Naive thymus-derived CD4-positive, alpha-beta T cell (primary cell): ENCODE measurements at regions of chr17 and their contacts with region 1.

Region 1: GRCh38 chr17:7687908-7688807 is at the start of gene WRAP53:
- DNase-seq: peak; percentile 93 to 97 (median 96)
- ATAC-seq: peak; percentile 89
- H3K4me3 ChIP-seq: peak within 1 kb of the TSS; percentile 96
- H3K4me3 Mint-ChIP-seq: peak within 1 kb of the TSS; percentile 95 to 99 (median 97)
- H3K27ac ChIP-seq: peak within 1 kb of the TSS; percentile 96
- H3K27ac Mint-ChIP-seq: peak within 1 kb of the TSS; percentile 99 to 100 (median 100)
- H3K4me1 ChIP-seq: peaks cover 28 to 31% of the 10 kb centered on the region in 2 donors
- H3K4me1 Mint-ChIP-seq: peaks cover 31 to 47% (median 41%) of the 10 kb centered on the region in 7 donors
- H3K27me3 ChIP-seq: no peaks in the 10 kb centered on the region
- H3K27me3 Mint-ChIP-seq: no peaks in the 10 kb centered on the region
- total RNA-seq, gene WRAP53: 6.7 to 21.1 (median 9.6) TPM

Region 2: DNA sequence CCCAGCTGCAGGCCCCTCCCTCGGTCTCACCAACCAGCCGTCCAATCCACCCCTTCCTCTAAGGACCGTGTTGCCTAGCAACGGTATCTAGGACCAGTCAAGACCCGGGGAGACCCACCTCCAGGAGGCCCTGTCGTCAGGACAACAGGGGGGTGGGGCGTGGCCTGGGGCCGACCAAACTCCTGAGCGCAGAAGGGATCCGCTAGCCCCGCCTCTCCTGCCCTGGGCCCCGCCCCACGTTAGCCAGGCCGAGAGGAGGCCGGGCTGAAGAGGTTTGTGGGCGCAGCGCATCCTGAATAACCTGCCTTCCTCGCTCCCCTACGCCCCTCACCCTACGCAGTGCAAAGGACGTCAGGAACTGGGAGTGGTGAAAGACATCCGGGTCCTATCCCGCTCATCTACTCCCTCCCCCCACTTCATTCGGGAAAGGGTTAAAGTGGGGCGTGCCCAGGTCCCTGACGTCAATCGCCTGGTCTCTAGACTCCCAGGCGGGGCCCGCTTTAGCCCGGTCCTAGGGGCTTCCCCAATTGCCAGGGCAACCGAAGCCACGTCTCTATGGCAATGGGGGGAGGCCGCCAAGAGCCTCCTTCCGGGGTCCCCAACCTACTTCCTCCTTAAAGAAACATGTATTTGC is 483.2 kb before region 1 on chr17:
- CTCF ChIA-PET with region 1: no interaction called
- POLR2A ChIA-PET with region 1: no interaction called
- intact Hi-C with region 1: loop called in 1 of 2 experiments (anchors 2 kb)
- DNase-seq: peak; percentile 90 to 99 (median 97)
- ATAC-seq: peak; percentile 90
- H3K4me3 ChIP-seq: peak overlapping the region; percentile 77
- H3K4me3 Mint-ChIP-seq: peak overlapping the region; percentile 67 to 94 (median 85)
- H3K27ac ChIP-seq: peak overlapping the region; percentile 91
- H3K27ac Mint-ChIP-seq: peak overlapping the region; percentile 88 to 99 (median 95)
- H3K4me1 ChIP-seq: peaks cover 15 to 17% of the 10 kb centered on the region in 2 donors
- H3K4me1 Mint-ChIP-seq: peaks cover 28 to 39% (median 32%) of the 10 kb centered on the region in 7 donors
- H3K27me3 ChIP-seq: no peaks in the 10 kb centered on the region
- H3K27me3 Mint-ChIP-seq: no peaks in the 10 kb centered on the region

Region 3: DNA sequence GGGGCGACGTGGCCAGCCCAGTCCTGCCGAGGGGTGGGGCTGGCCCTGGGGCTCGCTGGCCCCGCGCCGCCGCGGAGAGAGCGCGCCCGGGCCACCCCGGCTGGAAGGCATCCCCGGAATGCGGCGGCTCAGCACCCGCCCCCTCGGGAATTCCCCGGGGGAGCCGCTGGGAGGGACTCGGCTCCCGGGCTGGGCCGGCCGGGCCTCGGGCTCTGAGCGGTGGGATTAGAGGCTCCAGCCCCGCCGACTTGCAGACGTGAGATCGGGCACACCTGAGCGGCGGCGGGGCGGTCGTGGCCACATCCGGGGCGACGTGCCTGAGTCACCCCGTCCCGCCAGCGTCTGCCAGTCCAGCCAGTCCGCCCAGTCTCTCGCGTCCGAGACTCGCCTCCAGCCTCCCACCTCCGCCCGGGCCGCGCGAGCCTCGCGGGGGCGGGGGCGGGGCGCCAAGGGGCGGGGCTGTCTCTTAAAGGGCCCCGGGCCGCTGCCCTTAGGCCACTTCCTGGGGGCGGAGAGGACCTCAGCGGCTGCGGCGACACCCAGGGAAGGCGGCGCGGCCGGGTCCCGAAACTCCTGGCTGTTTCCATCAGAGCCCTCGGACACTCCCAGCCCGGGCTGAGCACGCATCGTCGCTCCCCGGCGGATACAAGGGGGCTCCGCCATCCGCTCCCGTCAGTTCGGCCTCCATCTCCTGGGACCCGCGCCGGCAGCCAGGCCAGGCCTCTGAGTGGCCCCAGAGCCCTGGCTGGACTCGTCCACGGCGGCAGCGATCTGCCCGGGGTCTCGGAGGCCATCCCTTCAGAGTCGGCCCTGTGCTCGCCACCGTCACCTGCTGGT is 336.3 kb before region 1 on chr17 and contains the start of gene KCTD11:
- CTCF ChIA-PET with region 1: interaction called, 4 read pairs
- POLR2A ChIA-PET with region 1: interaction called, 4 read pairs
- intact Hi-C with region 1: loop called in 1 of 2 experiments (anchors 5 kb)
- DNase-seq: peak; percentile 40 to 88 (median 58)
- ATAC-seq: peak; percentile 72
- H3K4me3 ChIP-seq: peak within 1 kb of the TSS; percentile 57
- H3K4me3 Mint-ChIP-seq: peak within 1 kb of the TSS; percentile 78 to 94 (median 88)
- H3K27ac ChIP-seq: peak within 1 kb of the TSS; percentile 74
- H3K27ac Mint-ChIP-seq: peak within 1 kb of the TSS; percentile 72 to 91 (median 86)
- H3K4me1 ChIP-seq: peaks cover 10 to 27% of the 10 kb centered on the region in 2 donors
- H3K4me1 Mint-ChIP-seq: peaks cover 14 to 62% (median 43%) of the 10 kb centered on the region in 7 donors
- H3K27me3 ChIP-seq: no peaks in the 10 kb centered on the region
- H3K27me3 Mint-ChIP-seq: no peaks in the 10 kb centered on the region
- total RNA-seq, gene KCTD11: 2.7 to 13.7 (median 4.0) TPM

Region 4: DNA sequence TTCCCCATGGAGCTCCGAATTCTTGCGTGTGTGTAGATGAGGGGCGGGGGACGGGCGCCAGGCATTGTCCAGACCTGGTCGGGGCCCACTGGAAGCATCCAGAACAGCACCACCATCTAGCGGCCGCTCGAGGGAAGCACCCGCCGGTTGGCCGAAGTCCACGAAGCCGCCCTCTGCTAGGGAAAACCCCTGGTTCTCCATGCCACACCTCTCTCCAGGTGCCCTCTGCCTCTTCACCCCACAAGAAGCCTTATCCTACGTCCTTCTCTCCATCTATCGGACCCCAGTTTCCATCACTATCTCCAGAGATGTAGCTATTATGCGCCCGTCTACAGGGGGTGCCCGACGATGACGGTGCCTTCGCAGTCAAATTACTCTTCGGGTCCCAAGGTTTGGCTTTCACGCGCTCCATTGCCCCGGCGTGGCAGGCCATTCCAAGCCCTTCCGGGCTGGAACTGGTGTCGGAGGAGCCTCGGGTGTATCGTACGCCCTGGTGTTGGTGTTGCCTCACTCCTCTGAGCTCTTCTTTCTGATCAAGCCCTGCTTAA is 127.1 kb before region 1 on chr17:
- CTCF ChIA-PET with region 1: interaction called, 13 read pairs
- POLR2A ChIA-PET with region 1: interaction called, 35 read pairs
- intact Hi-C with region 1: loop called in 1 of 2 experiments (anchors 1 kb)
- DNase-seq: peak; percentile 60 to 86 (median 71)
- ATAC-seq: peak; percentile 76
- H3K4me3 ChIP-seq: peak overlapping the region; percentile 96
- H3K4me3 Mint-ChIP-seq: peak overlapping the region; percentile 87 to 97 (median 93)
- H3K27ac ChIP-seq: peak overlapping the region; percentile 92
- H3K27ac Mint-ChIP-seq: peak overlapping the region; percentile 90 to 100 (median 96)
- H3K4me1 ChIP-seq: peaks cover 17 to 54% of the 10 kb centered on the region in 2 donors
- H3K4me1 Mint-ChIP-seq: peaks cover 33 to 55% (median 49%) of the 10 kb centered on the region in 7 donors
- H3K27me3 ChIP-seq: no peaks in the 10 kb centered on the region
- H3K27me3 Mint-ChIP-seq: peaks cover 0 to 2% (median 0%) of the 10 kb centered on the region in 5 donors

Region 5: GRCh38 chr17:7644775-7645174 is 43.4 kb before region 1 on chr17:
- CTCF ChIA-PET with region 1: interaction called, 8 read pairs
- POLR2A ChIA-PET with region 1: interaction called, 55 read pairs
- intact Hi-C with region 1: no loop called
- DNase-seq: no peak
- ATAC-seq: peak; percentile 75
- H3K4me3 ChIP-seq: no peak overlapping the region
- H3K4me3 Mint-ChIP-seq: peak overlapping the region in 1 of 10 donors; percentile 41
- H3K27ac ChIP-seq: no peak overlapping the region
- H3K27ac Mint-ChIP-seq: peak overlapping the region in 1 of 9 donors; percentile 12
- H3K4me1 ChIP-seq: peaks cover 0 to under 1% of the 10 kb centered on the region in 2 donors
- H3K4me1 Mint-ChIP-seq: peaks cover under 1 to 20% (median 11%) of the 10 kb centered on the region in 7 donors
- H3K27me3 ChIP-seq: peaks cover 0 to under 1% of the 10 kb centered on the region in 2 donors
- H3K27me3 Mint-ChIP-seq: peaks cover 7 to 21% (median 13%) of the 10 kb centered on the region in 5 donors

Region 6: DNA sequence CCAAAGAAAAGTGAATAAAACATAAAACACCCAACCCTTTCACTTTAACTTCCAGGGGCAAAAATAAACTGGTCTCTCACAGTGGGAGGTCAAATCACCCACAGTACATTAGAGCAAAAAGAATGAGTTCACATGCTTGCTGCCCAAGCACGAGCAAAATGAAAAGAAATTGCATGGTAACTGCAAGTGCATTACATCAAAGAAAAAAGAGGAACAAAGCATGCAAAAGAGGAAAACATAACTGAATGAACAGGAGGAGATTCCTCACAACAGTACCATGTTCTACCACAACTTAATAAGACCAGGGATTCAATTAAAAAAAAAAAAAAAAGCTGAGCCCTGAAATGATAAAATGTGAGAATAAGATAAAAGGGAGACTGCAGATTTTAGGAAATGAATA is 41.7 kb after region 1 on chr17:
- CTCF ChIA-PET with region 1: no interaction called
- POLR2A ChIA-PET with region 1: no interaction called
- intact Hi-C with region 1: no loop called
- DNase-seq: no peak
- ATAC-seq: peak; percentile 37
- H3K4me3 ChIP-seq: no peak overlapping the region
- H3K4me3 Mint-ChIP-seq: no peak overlapping the region
- H3K27ac ChIP-seq: no peak overlapping the region
- H3K27ac Mint-ChIP-seq: no peak overlapping the region
- H3K4me1 ChIP-seq: no peaks in the 10 kb centered on the region
- H3K4me1 Mint-ChIP-seq: no peaks in the 10 kb centered on the region
- H3K27me3 ChIP-seq: no peaks in the 10 kb centered on the region
- H3K27me3 Mint-ChIP-seq: peaks cover 8 to 26% (median 13%) of the 10 kb centered on the region in 5 donors

Region 7: GRCh38 chr17:7856883-7857723 is 168.9 kb after region 1 on chr17 and contains the start of gene NAA38:
- CTCF ChIA-PET with region 1: interaction called, 3 read pairs
- POLR2A ChIA-PET with region 1: interaction called, 10 read pairs
- intact Hi-C with region 1: loop called (anchors 1 kb)
- DNase-seq: peak; percentile 81 to 99 (median 97)
- ATAC-seq: peak; percentile 87
- H3K4me3 ChIP-seq: peak within 1 kb of the TSS; percentile 70
- H3K4me3 Mint-ChIP-seq: no peak within 1 kb of the TSS
- H3K27ac ChIP-seq: peak within 1 kb of the TSS; percentile 83
- H3K27ac Mint-ChIP-seq: no peak within 1 kb of the TSS
- H3K4me1 ChIP-seq: peaks cover 25 to 26% of the 10 kb centered on the region in 2 donors
- H3K4me1 Mint-ChIP-seq: peaks cover 0 to 16% (median 5%) of the 10 kb centered on the region in 7 donors
- H3K27me3 ChIP-seq: no peaks in the 10 kb centered on the region
- H3K27me3 Mint-ChIP-seq: no peaks in the 10 kb centered on the region
- total RNA-seq, gene NAA38: 22.1 to 63.8 (median 24.9) TPM

Region 8: GRCh38 chr17:8248751-8249607 is 560.8 kb after region 1 on chr17 and contains the start of gene PFAS:
- CTCF ChIA-PET with region 1: no interaction called
- POLR2A ChIA-PET with region 1: interaction called, 13 read pairs
- intact Hi-C with region 1: loop called (anchors 5 kb)
- DNase-seq: peak; percentile 91 to 98 (median 94)
- ATAC-seq: peak; percentile 64
- H3K4me3 ChIP-seq: peak within 1 kb of the TSS; percentile 94
- H3K4me3 Mint-ChIP-seq: peak within 1 kb of the TSS; percentile 92 to 100 (median 99)
- H3K27ac ChIP-seq: peak within 1 kb of the TSS; percentile 100
- H3K27ac Mint-ChIP-seq: peak within 1 kb of the TSS; percentile 97 to 100 (median 100)
- H3K4me1 ChIP-seq: peaks cover 28 to 35% of the 10 kb centered on the region in 2 donors
- H3K4me1 Mint-ChIP-seq: peaks cover 30 to 56% (median 50%) of the 10 kb centered on the region in 7 donors
- H3K27me3 ChIP-seq: no peaks in the 10 kb centered on the region
- H3K27me3 Mint-ChIP-seq: no peaks in the 10 kb centered on the region
- total RNA-seq, gene PFAS: 31.6 to 68.9 (median 31.9) TPM